Dorsolateral prefrontal cortex (tissue), 120 donors: ENCODE measurements at regions of chr22 and their contacts with region 1.

Region 1: DNA sequence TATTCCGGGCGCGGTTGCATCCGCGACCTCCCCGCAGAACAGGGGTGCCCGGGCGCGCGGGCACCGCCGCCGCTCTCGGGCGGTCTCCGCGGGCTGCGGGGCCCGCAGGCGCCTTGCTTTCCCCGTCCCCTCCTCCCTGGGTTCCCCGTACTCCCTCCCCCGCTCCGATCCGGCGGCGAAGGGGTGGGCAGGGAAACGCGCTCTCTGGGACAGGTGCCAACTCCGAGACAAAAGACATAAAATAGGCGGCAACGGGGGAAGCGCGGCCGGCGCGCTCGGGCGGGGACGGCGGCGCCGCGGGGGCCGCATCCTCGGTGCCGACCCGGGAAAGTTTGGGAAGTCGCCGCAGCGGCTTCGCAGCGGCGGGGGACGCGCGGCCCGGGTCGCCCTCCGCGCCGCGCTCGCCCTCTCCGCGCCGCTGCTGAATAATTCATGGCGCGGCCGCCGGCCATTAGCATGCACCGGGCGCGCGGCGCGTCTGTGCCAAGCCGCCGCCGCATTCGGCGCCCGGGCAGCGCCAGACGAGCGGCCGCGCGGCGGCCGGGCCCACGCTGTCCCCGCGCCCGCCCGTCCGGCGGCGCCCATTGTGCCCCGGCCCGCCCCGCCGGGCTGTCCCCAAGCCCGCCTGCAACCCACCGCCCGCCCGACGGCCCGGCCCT is 78.7 kb upstream of the PPARA start:
- DNase-seq: peak; percentile 76 to 90 (median 88)
- H3K4me3 ChIP-seq: peak overlapping the region; percentile 70 to 98 (median 93)
- H3K27ac ChIP-seq: peak overlapping the region; percentile 92 to 100 (median 99)
- H3K27me3 ChIP-seq: no peaks in the 10 kb centered on the region
- CTCF ChIP-seq: peak in 3 of 56 donors; percentile 2 to 20 (median 10)

Region 2: GRCh38 chr22:46013460-46014416 is 57.8 kb before region 1 on chr22:
- intact Hi-C with region 1: loop called in 1 of 2 experiments (anchors 10 kb)
- DNase-seq: peak; percentile 77 to 95 (median 83)
- H3K4me3 ChIP-seq: peak overlapping the region; percentile 30 to 80 (median 68)
- H3K27ac ChIP-seq: peak overlapping the region; percentile 68 to 99 (median 96)
- H3K27me3 ChIP-seq: no peaks in the 10 kb centered on the region
- CTCF ChIP-seq: peak; percentile 50 to 83 (median 71)

Region 3: DNA sequence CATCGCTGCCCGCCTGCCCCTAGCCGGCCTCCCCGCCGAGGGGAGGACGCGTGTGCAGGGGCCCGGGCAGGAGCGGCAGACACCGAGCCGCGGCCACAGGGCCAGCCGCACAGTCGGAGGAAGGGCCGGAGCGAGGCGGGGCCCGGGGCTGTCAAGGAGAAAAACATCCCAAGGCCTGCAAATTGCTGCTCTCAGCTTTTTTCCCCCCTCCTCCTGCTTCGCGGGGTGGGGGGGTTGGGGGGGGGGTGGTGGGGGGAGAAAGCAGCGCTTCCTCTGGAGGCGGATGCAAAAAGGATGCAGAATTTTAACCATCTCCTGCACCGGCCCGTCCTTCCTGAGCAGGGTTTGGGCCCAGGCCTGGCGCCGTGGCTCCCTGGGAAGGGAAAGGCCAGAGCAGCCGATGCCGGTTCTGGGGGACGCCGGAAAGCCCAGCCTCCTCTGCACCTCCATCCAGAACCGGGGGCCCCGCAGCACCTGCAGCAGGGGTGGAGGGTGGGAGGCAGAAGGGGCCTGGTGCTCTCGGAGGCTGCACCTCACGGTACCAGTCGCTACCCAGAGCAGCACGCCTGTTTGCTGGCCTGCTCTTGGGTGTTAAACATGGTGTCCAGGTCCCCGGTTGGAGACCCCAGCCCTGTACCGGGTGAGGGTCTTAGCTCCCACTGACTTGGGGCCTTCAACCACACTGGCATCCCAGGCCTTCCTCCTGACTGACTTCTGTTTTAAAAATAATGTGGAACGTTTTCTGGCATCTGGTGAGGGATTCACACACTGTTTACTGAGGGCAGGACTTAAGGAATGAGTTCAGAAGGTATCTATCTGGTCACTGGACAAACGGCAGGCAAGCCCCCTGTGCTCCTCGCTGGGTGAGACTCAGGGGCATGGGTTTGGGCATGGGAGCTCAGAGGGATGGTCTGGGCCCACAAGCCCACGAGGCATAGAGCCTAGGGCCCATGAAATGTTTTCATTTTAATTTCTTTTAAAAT is 17.2 kb before region 1 on chr22:
- intact Hi-C with region 1: loop called (anchors 1 to 2 kb)
- DNase-seq: peak in 8 of 10 donors; percentile 53 to 81 (median 74)
- H3K4me3 ChIP-seq: peak overlapping the region; percentile 47 to 85 (median 71)
- H3K27ac ChIP-seq: peak overlapping the region; percentile 99 to 100 (median 100)
- H3K27me3 ChIP-seq: no peaks in the 10 kb centered on the region
- CTCF ChIP-seq: peak in 1 of 56 donors; percentile 22

Region 4: GRCh38 chr22:46108564-46109473 is 37.2 kb after region 1 on chr22:
- intact Hi-C with region 1: loop called in 1 of 2 experiments (anchors 5 kb)
- DNase-seq: peak in 1 of 10 donors; percentile 43
- H3K4me3 ChIP-seq: peak overlapping the region in 2 of 59 donors; percentile 3 to 12
- H3K27ac ChIP-seq: peak overlapping the region; percentile 68 to 98 (median 95)
- H3K27me3 ChIP-seq: no peaks in the 10 kb centered on the region
- CTCF ChIP-seq: no peak